Stomach (tissue), 19 donors: ENCODE measurements at regions of chr6 and their contacts with region 1.

Region 1: DNA sequence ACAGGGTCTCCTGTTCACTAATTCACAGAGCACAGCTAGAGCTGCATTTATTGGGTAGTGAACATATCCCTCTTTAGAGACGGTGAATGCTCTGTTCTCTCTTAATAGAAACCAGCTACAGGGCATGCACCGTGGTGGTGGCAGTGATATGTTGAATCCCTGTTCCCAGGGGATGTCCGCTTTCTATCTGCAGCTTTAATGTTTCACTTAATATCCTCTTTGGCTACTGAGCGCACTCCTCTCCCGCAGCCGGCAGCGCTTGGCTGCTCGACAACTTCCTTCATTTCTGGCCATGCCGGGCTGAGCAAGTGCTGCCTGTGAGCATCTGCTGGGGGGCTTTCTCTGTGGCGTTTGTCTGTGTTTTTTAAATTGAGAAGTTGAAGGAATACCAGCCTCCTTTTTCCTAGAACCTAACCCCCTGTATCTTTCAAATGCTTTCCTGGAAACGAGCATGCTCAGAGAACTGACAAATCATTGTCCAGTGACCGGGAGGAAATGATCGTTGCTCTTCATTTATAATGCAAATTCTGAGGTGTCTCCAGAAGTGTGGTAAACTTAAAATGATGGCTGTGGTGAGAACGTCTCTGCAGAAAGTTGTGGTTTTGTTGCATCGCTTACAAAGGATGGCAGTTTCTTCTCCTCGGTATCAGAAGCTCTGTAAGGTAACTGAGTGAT is 297.9 kb downstream of the UTRN start:
- DNase-seq: peak; percentile 31 to 65
- H3K4me3 ChIP-seq: peak overlapping the region; percentile 2 to 16 (median 15)
- H3K27ac ChIP-seq: no peak overlapping the region
- H3K4me1 ChIP-seq: peaks cover 0 to 21% (median 9%) of the 10 kb centered on the region in 4 donors
- H3K27me3 ChIP-seq: no peaks in the 10 kb centered on the region
- CTCF ChIP-seq: no peak
- EP300 ChIP-seq: no peak
- POLR2A ChIP-seq: no peak

Region 2: GRCh38 chr6:144095331-144096002 is 487.6 kb before region 1 on chr6 and contains the start of gene SF3B5:
- intact Hi-C with region 1: no loop called
- DNase-seq: peak; percentile 99 to 100
- H3K4me3 ChIP-seq: peak within 1 kb of the TSS; percentile 70 to 98 (median 83)
- H3K27ac ChIP-seq: peak within 1 kb of the TSS; percentile 87 to 93 (median 89)
- H3K4me1 ChIP-seq: peaks cover 14 to 27% (median 24%) of the 10 kb centered on the region in 4 donors
- H3K27me3 ChIP-seq: no peaks in the 10 kb centered on the region
- CTCF ChIP-seq: no peak
- EP300 ChIP-seq: no peak
- POLR2A ChIP-seq: no peak
- total RNA-seq, gene SF3B5: 41.3 to 196 (median 170) TPM

Region 3: DNA sequence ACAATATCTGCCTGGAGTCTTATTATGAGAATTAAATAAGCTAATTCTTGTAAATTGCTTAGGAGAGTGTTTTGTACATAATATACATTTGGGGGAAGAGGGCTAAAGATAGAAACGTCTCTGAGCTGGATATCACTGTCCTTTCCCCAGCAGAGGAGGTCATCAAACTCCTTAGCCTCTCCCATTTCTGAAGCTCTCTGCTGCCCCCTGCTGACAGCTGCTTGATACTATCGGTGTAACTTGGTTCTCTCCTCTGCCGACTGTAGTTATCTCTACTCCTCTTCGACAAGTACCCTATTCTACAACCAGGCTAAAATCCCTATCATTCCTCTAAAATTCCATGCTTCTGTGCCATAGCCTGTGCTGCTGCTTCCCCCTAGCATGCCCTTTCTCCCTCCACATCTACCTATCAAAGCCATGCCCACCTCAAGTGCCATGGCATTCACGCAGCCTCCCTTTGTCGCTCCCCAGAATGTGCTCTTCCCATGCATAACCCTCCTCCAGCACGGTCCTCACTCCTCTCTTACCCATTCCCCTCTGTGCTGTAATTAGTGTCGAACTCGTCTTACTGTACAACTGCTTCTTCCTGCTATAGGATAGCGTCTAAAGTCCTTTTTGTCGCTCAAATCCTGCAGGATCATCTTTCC is 1051.0 kb after region 1 on chr6:
- intact Hi-C with region 1: loop called (anchors 10 kb)
- DNase-seq: peak; percentile 83 to 92
- H3K4me3 ChIP-seq: no peak overlapping the region
- H3K27ac ChIP-seq: no peak overlapping the region
- H3K4me1 ChIP-seq: peaks cover 0 to 5% (median 0%) of the 10 kb centered on the region in 4 donors
- H3K27me3 ChIP-seq: no peaks in the 10 kb centered on the region
- CTCF ChIP-seq: peak in 5 of 7 experiments; percentile 71 to 77 (median 73)
- EP300 ChIP-seq: no peak
- POLR2A ChIP-seq: no peak